AG04450 (cell line): ENCODE measurements at regions of chr20 and their contacts with region 1.

Region 1: GRCh38 chr20:1212607-1213396 is 9.5 kb downstream of the C20orf202 start:
- DNase-seq: peak; percentile 44
- H3K4me3 ChIP-seq: no peak overlapping the region
- H3K27ac ChIP-seq: no peak overlapping the region
- H3K27me3 ChIP-seq: peaks cover 44% of the 10 kb centered on the region
- CTCF ChIP-seq: peak; percentile 82

Region 2: GRCh38 chr20:956330-956951 is 256.4 kb before region 1 on chr20:
- CTCF ChIA-PET with region 1: interaction called, 10 read pairs
- POLR2A ChIA-PET with region 1: no interaction called
- DNase-seq: peak; percentile 15
- H3K4me3 ChIP-seq: no peak overlapping the region
- H3K27ac ChIP-seq: no peak overlapping the region
- H3K27me3 ChIP-seq: peaks cover 6% of the 10 kb centered on the region
- CTCF ChIP-seq: peak; percentile 97

Region 3: GRCh38 chr20:1199212-1199873 is 13.5 kb before region 1 on chr20:
- CTCF ChIA-PET with region 1: interaction called, 16 read pairs
- POLR2A ChIA-PET with region 1: no interaction called
- DNase-seq: no peak
- H3K4me3 ChIP-seq: no peak overlapping the region
- H3K27ac ChIP-seq: no peak overlapping the region
- H3K27me3 ChIP-seq: peaks cover 40% of the 10 kb centered on the region
- CTCF ChIP-seq: no peak